ENCODE measurements at regions of chr5 and their contacts with region 1.

Region 1: DNA sequence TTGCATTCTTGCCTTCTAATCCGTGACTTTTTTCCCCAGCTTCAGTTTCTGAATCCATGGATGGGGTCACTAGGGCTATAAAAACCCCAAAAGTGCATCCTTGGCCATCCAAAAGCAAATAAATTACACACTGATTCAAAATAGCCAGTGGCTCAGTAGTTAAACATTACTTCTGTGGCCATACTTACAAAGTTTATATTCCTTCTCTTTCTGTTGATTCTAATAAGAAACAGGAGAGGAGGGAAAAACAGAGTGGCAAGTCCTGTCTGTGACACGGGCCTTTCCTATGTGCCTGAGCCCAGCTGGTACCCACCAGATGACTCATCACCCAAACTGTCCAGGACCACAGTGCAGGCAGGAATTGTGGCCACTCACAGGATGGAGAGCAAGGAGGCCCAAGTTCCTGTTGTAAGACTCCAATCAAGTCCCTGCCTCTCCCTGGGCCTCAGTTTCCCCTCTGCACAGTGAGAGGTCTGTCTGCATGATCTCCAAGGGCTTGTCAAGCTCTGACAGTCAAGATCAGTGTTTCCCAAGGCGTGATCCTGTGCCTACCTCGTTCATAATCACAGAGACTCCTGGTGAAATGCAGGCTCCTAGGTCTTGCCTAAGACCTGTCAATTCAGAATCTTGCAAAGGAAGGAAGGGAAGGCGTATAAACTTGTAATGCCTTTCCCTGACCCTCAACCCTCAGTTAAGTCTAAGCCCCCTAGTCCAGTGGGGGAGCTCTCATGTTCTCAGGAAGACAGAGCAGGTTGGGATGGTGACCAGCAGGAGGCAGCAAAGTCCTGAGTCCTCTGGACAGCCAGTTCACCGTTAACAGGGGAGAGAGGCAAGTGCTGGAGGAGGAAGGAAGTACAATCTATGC is 29.5 kb downstream of the TNIP1 start:
- DNase-seq: peak; percentile 78 to 92
- ATAC-seq: peak; percentile 70

Region 2: GRCh38 chr5:150710165-150710564 is 341.1 kb before region 1 on chr5:
- intact Hi-C with region 1: no loop called
- DNase-seq: no peak
- ATAC-seq: no peak

Region 3: DNA sequence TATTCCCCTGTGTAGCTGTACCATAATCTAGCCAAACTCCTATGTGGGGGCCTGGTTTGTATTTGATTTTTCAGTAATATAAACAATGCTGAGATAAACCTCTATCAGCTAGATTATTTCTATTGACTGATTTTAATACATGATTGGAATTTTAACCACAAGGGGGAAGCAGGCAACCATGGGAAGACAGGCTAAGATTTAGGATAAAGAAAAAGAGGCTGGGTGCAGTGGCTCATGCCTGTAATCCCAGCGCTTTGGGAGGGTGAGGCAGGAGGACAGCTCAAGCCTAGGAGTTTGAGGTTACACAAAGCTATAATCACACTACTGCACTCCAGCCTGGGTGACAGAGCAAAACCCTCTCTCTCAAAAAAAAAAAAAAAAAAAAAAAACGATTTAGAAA is 49.0 kb before region 1 on chr5:
- intact Hi-C with region 1: loop called in 1 of 2 experiments (anchors 5 kb)
- DNase-seq: no peak
- ATAC-seq: peak; percentile 46

Region 4: DNA sequence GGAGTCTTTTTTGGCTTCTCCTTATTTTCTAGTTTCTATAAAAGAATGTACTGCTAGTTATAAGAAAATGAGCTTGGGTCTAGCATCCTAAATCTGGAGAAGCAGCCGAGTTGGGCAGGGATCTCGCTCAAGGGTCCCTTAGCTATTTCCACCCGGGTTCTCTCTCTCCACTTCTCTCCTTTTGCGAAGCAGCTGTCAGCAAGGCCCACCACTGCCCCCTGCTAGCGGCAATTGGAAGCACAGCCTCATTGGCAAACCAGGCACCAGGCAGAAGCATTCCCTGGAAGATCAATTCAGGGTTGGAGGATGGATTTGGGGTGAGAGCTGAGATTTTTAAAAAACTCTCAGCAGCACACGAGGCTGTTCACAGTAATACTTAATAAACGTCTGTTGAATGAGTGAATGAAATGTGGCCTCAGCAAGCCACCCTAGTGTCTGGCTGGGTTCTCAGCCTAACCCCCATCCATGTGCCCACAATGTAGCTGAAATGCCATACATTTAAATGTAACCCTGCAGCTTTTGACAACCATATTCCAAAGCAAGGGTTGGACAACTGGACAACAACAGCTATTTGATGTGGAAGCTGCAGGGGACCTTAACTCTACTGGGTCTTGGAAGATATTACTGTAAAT is 64.1 kb after region 1 on chr5:
- intact Hi-C with region 1: loop called (anchors 2 to 10 kb)
- DNase-seq: peak; percentile 68 to 83
- ATAC-seq: peak; percentile 82

Region 5: GRCh38 chr5:151239237-151239861 is 188.1 kb after region 1 on chr5:
- intact Hi-C with region 1: loop called in 1 of 2 experiments (anchors 10 kb)
- DNase-seq: peak; percentile 64 to 79
- ATAC-seq: peak; percentile 87